ENCODE measurements at regions of chr4 and their contacts with region 1.

Region 1: GRCh38 chr4:143538979-143539669 is 25.6 kb downstream of the SMARCA5 start:
- DNase-seq: peak in 2 of 9 experiments; percentile 27 to 52
- ATAC-seq: no peak
- H3K4me3 ChIP-seq: no peak overlapping the region
- H3K4me3 Mint-ChIP-seq: no peak overlapping the region
- H3K27ac ChIP-seq: no peak overlapping the region
- H3K27ac Mint-ChIP-seq: no peak overlapping the region
- H3K4me1 ChIP-seq: no peaks in the 10 kb centered on the region
- H3K4me1 Mint-ChIP-seq: peaks cover 12% of the 10 kb centered on the region
- H3K27me3 ChIP-seq: no peaks in the 10 kb centered on the region
- H3K27me3 Mint-ChIP-seq: no peaks in the 10 kb centered on the region
- CTCF ChIP-seq: no peak

Region 2: GRCh38 chr4:143046454-143046853 is 492.7 kb before region 1 on chr4:
- CTCF ChIA-PET with region 1: no interaction called
- POLR2A ChIA-PET with region 1: no interaction called
- intact Hi-C with region 1: no loop called
- DNase-seq: no peak
- ATAC-seq: no peak
- H3K4me3 ChIP-seq: no peak overlapping the region
- H3K4me3 Mint-ChIP-seq: no peak overlapping the region
- H3K27ac ChIP-seq: no peak overlapping the region
- H3K27ac Mint-ChIP-seq: no peak overlapping the region
- H3K4me1 ChIP-seq: no peaks in the 10 kb centered on the region
- H3K4me1 Mint-ChIP-seq: no peaks in the 10 kb centered on the region
- H3K27me3 ChIP-seq: no peaks in the 10 kb centered on the region
- H3K27me3 Mint-ChIP-seq: no peaks in the 10 kb centered on the region
- CTCF ChIP-seq: no peak

Region 3: DNA sequence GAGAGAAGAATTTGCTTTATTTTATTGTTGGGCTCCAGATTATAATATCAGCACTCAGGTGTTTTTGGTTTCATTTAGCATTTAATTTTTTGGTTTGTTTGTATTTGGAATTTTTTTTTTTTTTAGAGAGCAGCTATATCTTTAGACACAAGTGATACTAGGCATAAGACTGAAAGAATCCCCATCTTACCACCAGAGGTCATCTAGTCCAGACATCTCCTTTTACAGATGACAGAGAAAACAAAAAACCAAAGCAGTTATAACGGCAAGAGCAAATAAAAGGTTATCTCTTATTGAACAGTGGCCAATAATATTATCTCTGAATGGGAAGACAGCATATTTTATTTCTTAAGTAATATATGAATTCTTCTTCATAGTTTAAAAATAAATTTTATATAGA is 331.6 kb before region 1 on chr4:
- CTCF ChIA-PET with region 1: no interaction called
- POLR2A ChIA-PET with region 1: no interaction called
- intact Hi-C with region 1: loop called in 1 of 2 experiments (anchors 5 kb)
- DNase-seq: no peak
- ATAC-seq: no peak
- H3K4me3 ChIP-seq: no peak overlapping the region
- H3K4me3 Mint-ChIP-seq: no peak overlapping the region
- H3K27ac ChIP-seq: no peak overlapping the region
- H3K27ac Mint-ChIP-seq: peak overlapping the region; percentile 39
- H3K4me1 ChIP-seq: no peaks in the 10 kb centered on the region
- H3K4me1 Mint-ChIP-seq: peaks cover 14% of the 10 kb centered on the region
- H3K27me3 ChIP-seq: no peaks in the 10 kb centered on the region
- H3K27me3 Mint-ChIP-seq: no peaks in the 10 kb centered on the region
- CTCF ChIP-seq: no peak

Region 4: GRCh38 chr4:143524211-143524610 is 14.9 kb before region 1 on chr4:
- CTCF ChIA-PET with region 1: interaction called, 4 read pairs
- POLR2A ChIA-PET with region 1: no interaction called
- intact Hi-C with region 1: loop called in 1 of 2 experiments (anchors 2 kb)
- DNase-seq: no peak
- ATAC-seq: no peak
- H3K4me3 ChIP-seq: no peak overlapping the region
- H3K4me3 Mint-ChIP-seq: no peak overlapping the region
- H3K27ac ChIP-seq: no peak overlapping the region
- H3K27ac Mint-ChIP-seq: peak overlapping the region; percentile 24
- H3K4me1 ChIP-seq: peaks cover 4% of the 10 kb centered on the region
- H3K4me1 Mint-ChIP-seq: peaks cover 54% of the 10 kb centered on the region
- H3K27me3 ChIP-seq: no peaks in the 10 kb centered on the region
- H3K27me3 Mint-ChIP-seq: no peaks in the 10 kb centered on the region
- CTCF ChIP-seq: no peak